ENCODE measurements at regions of chrX and their contacts with region 1.

Region 1: GRCh38 chrX:147749308-147749707 is 162.4 kb upstream of the FMR1 start:
- DNase-seq: no peak
- H3K4me3 ChIP-seq: no peak overlapping the region
- H3K27ac ChIP-seq: no peak overlapping the region
- H3K4me1 ChIP-seq: no peaks in the 10 kb centered on the region
- H3K27me3 ChIP-seq: no peaks in the 10 kb centered on the region
- CTCF ChIP-seq: no peak

Region 2: DNA sequence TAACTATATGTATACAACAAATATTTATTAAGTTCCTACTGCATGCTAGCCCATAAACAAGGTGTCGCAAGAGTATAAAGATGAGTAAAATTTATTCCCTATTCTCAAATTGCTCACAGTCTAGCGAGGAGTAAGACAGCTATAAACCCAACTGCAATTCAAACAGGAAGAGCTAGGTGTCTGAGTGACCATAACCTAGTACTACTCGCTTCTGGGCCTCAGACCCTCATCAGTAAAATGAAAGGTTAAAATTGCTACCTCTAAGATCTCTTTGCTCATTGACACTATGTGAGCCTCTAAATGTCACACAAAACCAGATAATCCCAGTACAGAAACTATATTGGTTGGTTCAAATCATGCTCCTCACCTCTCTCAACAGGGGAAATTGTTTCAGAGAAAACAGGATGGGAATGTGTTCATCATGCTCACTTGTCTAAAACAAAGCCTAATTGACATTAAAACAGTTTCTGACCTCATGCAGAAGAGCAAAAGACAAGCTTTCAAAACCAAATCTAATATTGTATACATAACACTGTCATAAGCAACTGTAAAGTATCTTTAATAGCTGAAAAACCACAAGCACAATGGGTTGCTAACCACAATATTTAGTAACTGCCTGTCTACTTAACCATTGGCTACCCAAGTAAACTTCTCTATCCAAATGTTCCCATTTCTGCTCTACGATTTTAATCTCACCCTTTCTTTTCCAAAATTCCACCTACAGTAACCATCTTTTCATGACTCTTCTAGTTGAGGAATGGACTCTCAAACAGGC is 102.2 kb before region 1 on chrX:
- CTCF ChIA-PET with region 1: interaction called, 11 read pairs
- POLR2A ChIA-PET with region 1: no interaction called
- intact Hi-C with region 1: no loop called
- DNase-seq: no peak
- H3K4me3 ChIP-seq: no peak overlapping the region
- H3K27ac ChIP-seq: no peak overlapping the region
- H3K4me1 ChIP-seq: no peaks in the 10 kb centered on the region
- H3K27me3 ChIP-seq: no peaks in the 10 kb centered on the region
- CTCF ChIP-seq: no peak